Left ventricle myocardium inferior (tissue), 1 donor: ENCODE measurements at regions of chr2 and their contacts with region 1.

Region 1: GRCh38 chr2:68196120-68196716 is 38.5 kb downstream of the PNO1 start:
- DNase-seq: no peak
- H3K4me3 ChIP-seq: no peak overlapping the region
- H3K27ac ChIP-seq: no peak overlapping the region
- H3K4me1 ChIP-seq: peaks cover 54% of the 10 kb centered on the region
- H3K27me3 ChIP-seq: no peaks in the 10 kb centered on the region
- CTCF ChIP-seq: peak; percentile 82

Region 2: DNA sequence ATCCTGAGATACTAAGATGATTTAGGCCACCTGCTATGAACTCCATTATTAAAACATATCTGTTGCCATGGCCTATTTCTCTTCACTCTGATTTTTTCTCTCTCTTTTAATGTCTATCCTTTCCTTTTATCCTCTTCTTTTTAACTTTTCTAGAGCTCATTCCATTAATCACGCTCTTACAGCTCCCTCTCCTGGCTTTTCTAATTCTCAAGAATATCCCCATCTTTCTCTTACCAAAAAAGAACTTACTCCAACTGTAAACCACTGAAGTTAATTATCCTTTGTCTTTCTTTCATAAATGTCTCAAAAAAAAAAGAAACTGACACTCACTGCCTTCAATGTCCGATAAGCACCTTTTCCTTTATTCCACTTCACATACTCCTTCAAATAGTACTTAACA is 48.2 kb after region 1 on chr2:
- intact Hi-C with region 1: loop called (anchors 5 kb)
- DNase-seq: no peak
- H3K4me3 ChIP-seq: no peak overlapping the region
- H3K27ac ChIP-seq: no peak overlapping the region
- H3K4me1 ChIP-seq: peaks cover 93% of the 10 kb centered on the region
- H3K27me3 ChIP-seq: no peaks in the 10 kb centered on the region
- CTCF ChIP-seq: peak; percentile 16

Region 3: DNA sequence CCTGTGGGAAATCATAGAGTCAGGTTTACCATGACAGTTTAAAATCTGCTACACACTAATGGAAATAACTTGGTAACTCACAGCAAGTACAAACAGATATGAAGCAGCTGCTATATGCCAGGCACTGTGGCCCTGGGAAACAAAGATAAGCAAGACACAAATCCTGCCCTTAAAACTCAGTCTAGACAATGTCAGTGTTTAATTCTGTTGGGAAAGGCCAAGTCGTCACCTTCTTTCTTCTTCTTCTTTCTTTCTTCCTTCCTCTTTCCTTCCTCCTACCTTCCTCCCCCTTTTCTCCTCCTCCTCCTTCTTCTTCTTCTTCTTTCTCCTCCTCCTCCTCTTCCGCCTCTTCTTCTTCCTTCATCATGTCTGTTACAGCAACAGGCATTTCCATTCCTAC is 195.7 kb after region 1 on chr2:
- intact Hi-C with region 1: no loop called
- DNase-seq: no peak
- H3K4me3 ChIP-seq: no peak overlapping the region
- H3K27ac ChIP-seq: peak overlapping the region; percentile 37
- H3K4me1 ChIP-seq: peaks cover 45% of the 10 kb centered on the region
- H3K27me3 ChIP-seq: no peaks in the 10 kb centered on the region
- CTCF ChIP-seq: no peak